Endothelial cell of umbilical vein (primary cell): ENCODE measurements at regions of chr3 and their contacts with region 1.

Region 1: DNA sequence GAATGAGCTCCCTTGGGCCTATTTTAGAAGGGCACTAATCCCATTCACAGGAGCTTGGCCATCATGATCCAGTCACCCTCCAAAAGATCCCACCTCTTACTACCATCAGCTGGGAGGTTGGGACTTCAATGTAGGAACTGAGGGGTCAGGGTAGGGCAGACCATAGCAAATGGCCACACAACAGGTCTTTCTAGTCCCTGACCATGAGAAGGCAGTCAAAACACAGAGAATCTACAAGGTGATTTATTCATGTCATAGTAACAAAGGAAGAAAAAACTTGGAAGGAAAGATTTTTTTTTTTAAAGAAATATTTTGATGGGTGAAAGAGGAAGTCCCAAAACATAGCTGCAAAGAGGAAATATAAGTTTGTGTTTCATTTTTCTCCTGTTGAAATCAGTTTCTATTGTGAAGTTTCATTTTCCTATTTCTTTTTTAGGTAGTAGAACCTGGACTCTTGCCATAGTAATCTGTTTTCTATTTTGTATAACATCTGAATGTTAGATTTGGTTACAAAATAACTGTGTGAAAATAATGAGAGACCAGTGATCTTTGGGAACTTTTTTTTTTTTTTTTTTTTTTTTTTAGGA is 23.5 kb upstream of the TNFSF10 start:
- DNase-seq: peak; percentile 40
- H3K4me3 ChIP-seq: no peak overlapping the region
- H3K27ac ChIP-seq: no peak overlapping the region
- H3K4me1 ChIP-seq: peaks cover 5% of the 10 kb centered on the region
- H3K27me3 ChIP-seq: no peaks in the 10 kb centered on the region
- CTCF ChIP-seq: no peak
- POLR2A ChIP-seq: no peak

Region 2: GRCh38 chr3:172562871-172563863 is 16.4 kb after region 1 on chr3:
- CTCF ChIA-PET with region 1: interaction called, 5 read pairs
- POLR2A ChIA-PET with region 1: no interaction called
- dilution Hi-C with region 1: no loop called
- intact Hi-C with region 1: loop called (anchors 1 kb)
- DNase-seq: peak; percentile 90
- H3K4me3 ChIP-seq: peak overlapping the region in 2 of 3 experiments; percentile 22 to 35
- H3K27ac ChIP-seq: peak overlapping the region; percentile 75
- H3K4me1 ChIP-seq: peaks cover 15% of the 10 kb centered on the region
- H3K27me3 ChIP-seq: no peaks in the 10 kb centered on the region
- CTCF ChIP-seq: no peak
- POLR2A ChIP-seq: peak; percentile 26